ENCODE measurements at regions of chr4 and their contacts with region 1.

Region 1: GRCh38 chr4:84870398-84871163 is 95.9 kb downstream of the WDFY3 start:
- DNase-seq: no peak
- ATAC-seq: no peak
- H3K4me3 Mint-ChIP-seq: no peak overlapping the region
- H3K27ac Mint-ChIP-seq: no peak overlapping the region
- H3K4me1 Mint-ChIP-seq: no peaks in the 10 kb centered on the region
- H3K27me3 Mint-ChIP-seq: peaks cover under 1% of the 10 kb centered on the region

Region 2: DNA sequence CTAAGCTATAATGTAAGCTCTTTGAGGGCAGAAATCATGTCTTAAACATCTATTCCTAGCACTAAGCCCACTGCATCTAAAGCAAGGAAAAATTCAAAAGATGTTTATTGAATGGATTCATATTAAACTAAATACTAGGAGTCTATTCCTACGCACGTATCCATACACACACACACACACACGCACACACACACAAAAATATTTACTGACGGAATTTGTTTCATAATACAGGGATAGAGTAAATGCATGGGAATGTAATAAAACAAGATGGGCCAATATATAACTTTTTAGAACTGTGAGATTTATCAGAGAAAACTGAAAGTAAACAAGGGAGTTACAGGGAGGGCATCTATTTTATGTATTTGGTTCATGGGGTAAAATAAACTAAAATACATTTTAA is 38.3 kb after region 1 on chr4:
- CTCF ChIA-PET with region 1: no interaction called
- POLR2A ChIA-PET with region 1: no interaction called
- intact Hi-C with region 1: no loop called
- DNase-seq: no peak
- ATAC-seq: no peak
- H3K4me3 Mint-ChIP-seq: no peak overlapping the region
- H3K27ac Mint-ChIP-seq: no peak overlapping the region
- H3K4me1 Mint-ChIP-seq: no peaks in the 10 kb centered on the region
- H3K27me3 Mint-ChIP-seq: peaks cover 5% of the 10 kb centered on the region

Region 3: DNA sequence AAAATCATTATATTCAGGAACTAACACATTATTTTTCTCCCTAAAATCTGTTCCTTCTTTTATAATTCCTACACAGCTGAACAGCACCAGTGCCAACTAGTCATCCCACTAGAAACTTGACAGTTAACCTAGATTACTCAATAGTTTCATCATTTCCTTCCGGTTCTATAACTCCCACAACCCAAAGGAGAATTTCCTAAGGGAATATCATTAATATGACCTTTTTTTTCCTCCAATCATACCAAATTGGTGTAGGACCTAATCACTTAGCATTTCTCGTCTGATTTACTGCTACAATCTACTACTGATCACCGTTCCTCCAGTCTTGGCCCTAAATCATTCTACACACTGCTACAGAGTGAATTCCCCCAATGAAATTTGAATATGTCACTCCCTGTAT is 50.0 kb after region 1 on chr4:
- CTCF ChIA-PET with region 1: no interaction called
- POLR2A ChIA-PET with region 1: no interaction called
- intact Hi-C with region 1: loop called in 1 of 2 experiments (anchors 5 kb)
- DNase-seq: no peak
- ATAC-seq: no peak
- H3K4me3 Mint-ChIP-seq: no peak overlapping the region
- H3K27ac Mint-ChIP-seq: no peak overlapping the region
- H3K4me1 Mint-ChIP-seq: no peaks in the 10 kb centered on the region
- H3K27me3 Mint-ChIP-seq: peaks cover 2% of the 10 kb centered on the region

Region 4: DNA sequence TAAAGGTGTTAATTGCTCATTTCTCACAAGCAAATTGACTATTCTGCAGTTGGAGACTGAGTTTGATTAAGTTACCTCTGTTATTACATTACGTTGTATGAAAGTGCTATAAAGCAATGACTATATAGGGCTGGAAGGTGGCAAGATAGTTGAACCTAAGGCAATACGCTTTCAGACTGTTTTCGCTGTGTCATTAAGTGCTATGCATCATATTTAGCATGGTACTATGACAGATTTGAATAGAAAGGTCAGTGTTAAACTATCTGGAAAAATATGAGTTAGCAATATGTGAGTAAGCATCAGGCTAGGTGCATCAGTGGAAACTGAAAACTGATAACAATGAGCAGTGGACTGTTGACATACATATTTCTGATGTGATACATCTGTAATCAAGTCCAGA is 398.4 kb after region 1 on chr4:
- CTCF ChIA-PET with region 1: no interaction called
- POLR2A ChIA-PET with region 1: no interaction called
- intact Hi-C with region 1: no loop called
- DNase-seq: no peak
- ATAC-seq: no peak
- H3K4me3 Mint-ChIP-seq: no peak overlapping the region
- H3K27ac Mint-ChIP-seq: no peak overlapping the region
- H3K4me1 Mint-ChIP-seq: no peaks in the 10 kb centered on the region
- H3K27me3 Mint-ChIP-seq: no peaks in the 10 kb centered on the region